ENCODE measurements at regions of chr15 and their contacts with region 1.

Region 1: DNA sequence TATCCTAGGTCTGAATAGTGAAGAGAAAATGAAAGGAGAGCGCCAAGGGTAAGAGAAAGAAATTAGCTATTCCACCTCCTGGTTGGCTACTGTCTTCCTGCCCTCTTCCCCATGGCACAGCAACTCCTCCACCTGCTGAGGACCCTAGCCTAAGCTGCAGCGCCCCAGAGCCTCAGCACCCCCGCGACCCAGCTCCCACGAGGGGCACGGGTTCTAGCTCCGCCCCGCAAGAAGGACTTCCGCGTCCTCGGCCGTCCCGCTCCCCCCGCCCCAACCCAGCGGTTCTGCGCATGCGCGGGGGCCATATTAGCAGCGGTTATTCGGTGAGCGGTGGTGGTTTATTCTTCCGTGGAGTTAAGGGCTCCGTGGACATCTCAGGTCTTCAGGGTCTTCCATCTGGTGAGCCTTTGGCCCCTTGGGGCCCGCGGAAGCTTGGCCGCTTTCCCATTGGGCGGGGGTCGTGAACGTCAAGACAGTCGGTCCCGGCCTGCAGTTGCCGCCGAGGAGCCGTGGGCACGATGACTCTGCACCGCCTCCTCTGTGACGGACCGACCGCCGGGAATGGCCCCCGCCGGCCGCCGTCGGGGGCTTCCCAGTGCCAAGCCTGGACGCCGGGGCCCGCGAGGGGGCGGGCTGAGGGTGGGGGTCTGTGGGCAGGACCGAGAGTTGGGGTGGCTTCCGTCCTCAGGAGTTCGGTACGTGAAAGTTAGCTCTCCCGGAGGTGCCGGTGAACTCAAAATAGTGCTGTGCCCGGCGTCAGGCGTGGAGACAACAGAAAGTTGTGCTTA is at the start of gene PSMA4:
- DNase-seq: peak; percentile 66
- H3K4me3 ChIP-seq: peak within 1 kb of the TSS; percentile 90
- H3K27ac ChIP-seq: peak within 1 kb of the TSS; percentile 89
- H3K27me3 ChIP-seq: no peaks in the 10 kb centered on the region
- CTCF ChIP-seq: 0 out of 2 replicates have a peak, but pooled peaks have one; percentile 15
- polyA plus RNA-seq, gene PSMA4: 270 and 395 TPM in 2 replicates

Region 2: GRCh38 chr15:78461171-78461888 is 79.0 kb before region 1 on chr15:
- CTCF ChIA-PET with region 1: no interaction called
- POLR2A ChIA-PET with region 1: no interaction called
- DNase-seq: no peak
- H3K4me3 ChIP-seq: no peak overlapping the region
- H3K27ac ChIP-seq: no peak overlapping the region
- H3K27me3 ChIP-seq: no peaks in the 10 kb centered on the region
- CTCF ChIP-seq: no peak

Region 3: DNA sequence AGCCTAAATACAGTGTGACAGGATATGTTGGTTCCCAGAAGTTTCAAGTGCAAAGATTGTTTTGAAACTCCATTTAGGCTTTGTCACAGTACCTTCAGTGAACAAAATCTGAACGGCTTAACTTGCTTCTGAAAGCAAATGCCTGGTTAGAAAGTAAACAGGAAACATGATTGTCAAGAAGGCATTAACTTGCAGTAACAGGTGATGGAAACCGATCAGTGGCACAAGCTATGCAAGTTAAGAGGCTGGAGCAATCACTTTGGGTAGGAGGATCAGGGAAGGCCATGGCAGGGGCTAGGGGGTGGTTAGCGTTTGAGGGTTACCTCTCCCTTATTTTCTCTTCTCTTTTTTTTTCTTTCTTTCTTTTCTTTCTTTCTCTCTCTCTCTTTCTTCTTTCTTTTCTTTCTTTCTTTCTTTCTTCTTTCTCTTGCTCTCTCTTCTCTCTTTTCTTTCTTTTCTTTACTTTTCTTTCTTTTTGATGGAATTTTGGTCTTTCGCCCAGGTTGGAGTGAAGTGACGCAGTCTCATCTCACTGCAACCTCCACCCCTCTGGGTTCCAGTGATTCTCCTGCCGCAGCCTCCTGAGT is 30.5 kb before region 1 on chr15:
- CTCF ChIA-PET with region 1: interaction called, 4 read pairs
- POLR2A ChIA-PET with region 1: interaction called, 13 read pairs
- DNase-seq: no peak
- H3K4me3 ChIP-seq: no peak overlapping the region
- H3K27ac ChIP-seq: no peak overlapping the region
- H3K27me3 ChIP-seq: no peaks in the 10 kb centered on the region
- CTCF ChIP-seq: no peak

Region 4: GRCh38 chr15:78565097-78565951 is 25.0 kb after region 1 on chr15 and contains the start of gene CHRNA5:
- CTCF ChIA-PET with region 1: interaction called, 3 read pairs
- POLR2A ChIA-PET with region 1: interaction called, 12 read pairs
- DNase-seq: peak; percentile 21
- H3K4me3 ChIP-seq: peak within 1 kb of the TSS; percentile 76
- H3K27ac ChIP-seq: peak within 1 kb of the TSS; percentile 39
- H3K27me3 ChIP-seq: peaks cover 2% of the 10 kb centered on the region
- CTCF ChIP-seq: no peak
- polyA plus RNA-seq, gene CHRNA5: 4.3 and 5.2 TPM in 2 replicates

Region 5: DNA sequence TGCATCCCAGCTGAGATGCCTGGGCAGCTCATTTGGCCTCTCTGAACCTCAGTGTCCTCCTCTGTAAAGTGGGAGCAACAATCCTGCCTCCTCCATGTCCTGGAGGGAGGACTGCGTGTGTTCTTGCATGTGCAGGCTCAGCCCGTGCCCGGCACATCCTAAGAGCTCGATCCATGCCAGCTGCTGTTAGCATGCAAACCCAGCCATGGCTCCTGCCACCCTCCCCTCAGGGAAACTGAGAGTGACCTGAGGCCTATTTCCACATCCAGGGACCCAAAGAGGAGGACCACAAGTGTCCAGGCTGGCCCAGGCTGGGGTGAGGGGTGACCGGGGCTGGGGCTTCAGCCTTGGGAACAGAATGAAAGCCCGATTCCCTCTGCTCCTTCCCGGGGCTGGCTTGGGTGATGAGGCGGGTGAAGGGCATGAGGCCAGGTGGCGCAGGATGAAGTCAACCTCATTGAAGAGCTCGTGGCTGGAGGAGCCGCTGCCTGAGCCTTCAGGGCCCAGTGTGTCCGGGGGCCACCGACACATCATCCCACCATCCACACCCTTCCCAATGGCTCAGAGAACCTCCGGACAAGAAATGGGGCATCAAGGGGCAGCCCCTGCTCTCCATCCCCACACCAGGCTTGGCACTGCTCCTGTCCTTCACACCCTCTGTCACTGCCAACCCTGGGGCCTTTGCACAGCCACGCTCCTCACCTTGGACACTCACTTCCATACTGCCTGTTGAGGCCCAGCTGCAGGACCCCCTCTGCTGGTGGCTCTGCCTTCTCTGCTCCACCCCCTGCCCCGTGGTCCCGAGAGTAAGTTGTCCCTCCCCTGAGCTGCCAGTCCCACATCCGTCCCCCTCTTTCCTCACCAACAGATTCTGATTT is 228.4 kb after region 1 on chr15:
- CTCF ChIA-PET with region 1: no interaction called
- POLR2A ChIA-PET with region 1: no interaction called
- DNase-seq: no peak
- H3K4me3 ChIP-seq: no peak overlapping the region
- H3K27ac ChIP-seq: no peak overlapping the region
- H3K27me3 ChIP-seq: no peaks in the 10 kb centered on the region
- CTCF ChIP-seq: no peak